ENCODE measurements at regions of chr7 and their contacts with region 1.

Region 1: GRCh38 chr7:149005241-149006050 is 22.9 kb downstream of the PDIA4 start:
- DNase-seq: peak; percentile 86
- ATAC-seq: peak; percentile 88
- H3K4me3 Mint-ChIP-seq: no peak overlapping the region
- H3K27ac Mint-ChIP-seq: peak overlapping the region; percentile 67
- H3K4me1 Mint-ChIP-seq: peaks cover 4% of the 10 kb centered on the region
- H3K27me3 Mint-ChIP-seq: no peaks in the 10 kb centered on the region

Region 2: GRCh38 chr7:148884299-148885022 is 121.0 kb before region 1 on chr7:
- CTCF ChIA-PET with region 1: no interaction called
- DNase-seq: peak; percentile 95
- ATAC-seq: peak; percentile 94
- H3K4me3 Mint-ChIP-seq: peak overlapping the region; percentile 96
- H3K27ac Mint-ChIP-seq: peak overlapping the region; percentile 99
- H3K4me1 Mint-ChIP-seq: peaks cover 35% of the 10 kb centered on the region
- H3K27me3 Mint-ChIP-seq: no peaks in the 10 kb centered on the region

Region 3: DNA sequence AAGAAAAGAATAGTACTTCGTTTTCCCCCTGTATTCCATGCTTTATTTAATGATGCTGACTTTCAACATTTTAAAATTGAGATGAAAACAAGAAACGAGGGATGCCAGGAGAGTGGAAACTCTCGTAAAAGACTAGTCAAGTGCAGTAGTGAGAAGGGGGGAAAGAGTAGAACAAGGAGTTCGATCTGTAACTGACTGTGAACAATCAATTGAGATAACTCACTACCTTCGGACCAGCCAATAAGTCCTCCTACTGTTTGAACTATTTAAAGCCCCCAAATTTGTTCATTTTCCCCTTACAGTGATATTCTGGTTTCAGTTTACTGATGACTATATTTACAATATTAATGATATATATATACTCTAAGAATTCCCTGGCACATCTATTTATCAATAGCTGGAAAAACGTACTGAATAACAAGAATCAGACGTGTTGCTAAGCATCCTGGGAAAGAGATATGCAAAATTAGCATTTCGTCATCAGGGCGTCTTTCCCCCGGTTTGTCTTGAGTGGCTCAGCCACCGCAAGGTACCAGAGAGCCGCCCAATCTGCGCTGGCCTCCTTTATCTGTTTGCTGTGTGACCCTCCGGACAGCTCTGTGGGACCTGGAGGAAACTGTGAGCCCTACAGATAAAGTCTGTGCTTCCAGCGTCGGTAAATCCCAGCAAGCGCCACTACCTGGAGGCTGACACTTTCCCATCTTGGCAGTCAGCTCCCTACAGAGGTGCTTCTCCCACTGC is 18.3 kb before region 1 on chr7:
- CTCF ChIA-PET with region 1: interaction called, 10 read pairs
- DNase-seq: peak; percentile 91
- ATAC-seq: peak; percentile 89
- H3K4me3 Mint-ChIP-seq: peak overlapping the region; percentile 92
- H3K27ac Mint-ChIP-seq: peak overlapping the region; percentile 83
- H3K4me1 Mint-ChIP-seq: peaks cover 44% of the 10 kb centered on the region
- H3K27me3 Mint-ChIP-seq: peaks cover 21% of the 10 kb centered on the region

Region 4: DNA sequence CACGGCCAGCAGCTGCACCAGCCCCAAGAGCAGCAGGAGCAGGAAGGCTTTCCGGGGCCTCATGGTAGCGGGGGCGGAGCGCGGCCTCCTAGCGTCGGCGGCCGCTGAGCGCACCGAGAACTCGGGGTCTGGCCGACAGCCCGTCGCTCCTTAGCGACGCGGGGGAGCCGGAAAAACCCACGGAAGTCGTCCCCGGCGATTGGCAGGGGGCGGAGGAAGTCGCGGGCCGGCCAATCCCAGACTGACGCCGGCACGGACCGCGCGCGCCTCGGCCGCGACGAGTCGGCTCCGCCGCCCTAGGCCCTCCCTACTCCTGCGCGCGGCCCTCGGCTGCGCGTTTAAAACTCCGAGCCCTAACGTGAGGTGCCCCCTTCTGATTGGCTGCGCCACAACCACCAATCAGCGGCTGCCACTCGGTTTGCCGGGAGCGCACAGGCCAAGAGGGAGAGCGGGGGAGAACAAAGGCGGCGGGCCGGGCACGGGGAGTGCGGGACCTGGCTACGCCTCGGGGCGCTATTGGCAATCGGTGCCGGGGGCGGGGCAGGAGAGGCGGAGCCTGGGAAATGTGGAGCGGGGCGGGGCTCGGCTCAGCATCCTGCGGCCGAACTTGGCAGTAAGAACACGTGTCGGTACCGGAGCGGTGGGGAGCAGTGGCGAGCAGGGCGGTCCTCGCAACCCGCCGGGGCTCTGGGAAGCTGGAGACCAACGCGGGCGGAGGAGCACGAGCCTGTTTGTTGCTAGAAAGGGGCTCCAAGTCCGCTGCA is 23.1 kb after region 1 on chr7 and contains the start of gene PDIA4:
- CTCF ChIA-PET with region 1: interaction called, 13 read pairs
- DNase-seq: peak; percentile 100
- ATAC-seq: peak; percentile 93
- H3K4me3 Mint-ChIP-seq: peak within 1 kb of the TSS; percentile 94
- H3K27ac Mint-ChIP-seq: peak within 1 kb of the TSS; percentile 90
- H3K4me1 Mint-ChIP-seq: peaks cover 34% of the 10 kb centered on the region
- H3K27me3 Mint-ChIP-seq: peaks cover 3% of the 10 kb centered on the region
- total RNA-seq, gene PDIA4: 82.3 to 99.4 TPM

Region 5: DNA sequence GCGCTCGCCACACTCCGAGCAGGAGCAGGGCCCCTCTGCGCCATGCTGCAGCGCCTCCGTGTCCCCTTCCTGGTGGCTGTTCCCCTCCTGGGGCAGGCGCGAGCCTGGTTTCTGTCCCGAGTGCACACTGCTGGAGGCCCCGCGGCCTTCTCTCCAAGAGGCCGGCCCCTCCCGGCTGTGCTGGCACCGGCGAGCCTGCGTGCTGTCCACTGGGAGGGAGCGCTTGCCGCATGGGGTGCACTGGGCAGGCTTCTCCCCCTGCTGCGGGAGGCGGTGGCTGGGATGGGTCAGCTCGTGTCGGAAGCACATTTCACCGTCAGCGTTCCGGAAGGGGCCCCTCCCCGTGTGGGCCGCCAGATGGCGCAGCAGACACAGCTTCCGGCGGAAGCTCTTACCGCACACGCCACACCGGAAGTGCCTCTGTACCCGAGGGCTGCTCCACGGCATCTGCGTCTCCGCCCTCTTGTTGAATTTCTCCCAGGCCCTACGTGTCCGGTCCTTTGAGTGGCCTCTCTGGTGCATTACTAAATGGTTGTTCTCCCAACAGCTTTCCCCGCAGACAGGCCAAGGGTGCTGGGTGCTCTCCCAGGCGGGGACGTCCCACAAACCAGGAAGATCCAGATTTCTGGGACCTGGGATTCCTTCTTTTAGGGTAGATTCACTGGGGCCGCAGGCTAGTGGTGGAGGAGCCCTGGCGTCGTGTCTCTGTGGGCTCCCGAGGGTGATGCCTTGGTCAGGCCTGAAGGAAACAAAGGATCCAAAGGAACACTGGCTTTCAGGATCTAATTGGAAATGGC is 66.4 kb after region 1 on chr7:
- CTCF ChIA-PET with region 1: interaction called, 109 read pairs
- DNase-seq: peak; percentile 62
- ATAC-seq: peak; percentile 74
- H3K4me3 Mint-ChIP-seq: no peak overlapping the region
- H3K27ac Mint-ChIP-seq: peak overlapping the region; percentile 74
- H3K4me1 Mint-ChIP-seq: peaks cover 11% of the 10 kb centered on the region
- H3K27me3 Mint-ChIP-seq: no peaks in the 10 kb centered on the region

Region 6: DNA sequence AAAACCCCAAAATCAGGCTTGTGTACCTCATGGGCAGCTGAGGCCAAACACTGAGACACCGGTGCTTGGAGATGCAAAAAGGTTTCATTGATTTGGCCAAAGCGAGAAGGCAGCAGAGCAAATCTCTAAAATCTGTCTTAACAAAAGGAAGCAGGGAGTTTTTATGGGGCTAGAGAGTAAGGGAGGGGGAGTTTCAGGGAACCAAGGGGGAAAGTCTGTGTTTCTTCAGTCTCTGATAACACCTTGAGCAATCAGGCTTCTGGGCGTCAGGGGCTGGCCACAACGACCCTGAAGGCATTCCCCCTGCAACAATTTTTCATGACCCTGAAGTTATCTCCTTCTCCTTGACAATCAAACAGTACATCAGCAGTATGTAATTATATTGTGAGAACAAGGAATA is 87.8 kb after region 1 on chr7:
- CTCF ChIA-PET with region 1: interaction called, 14 read pairs
- DNase-seq: no peak
- ATAC-seq: no peak
- H3K4me3 Mint-ChIP-seq: no peak overlapping the region
- H3K27ac Mint-ChIP-seq: no peak overlapping the region
- H3K4me1 Mint-ChIP-seq: peaks cover 11% of the 10 kb centered on the region
- H3K27me3 Mint-ChIP-seq: no peaks in the 10 kb centered on the region